ENCODE measurements at regions of chr1 and their contacts with region 1.

Region 1: GRCh38 chr1:41639332-41639936 is 155.0 kb upstream of the EDN2 start:
- DNase-seq: peak; percentile 71
- H3K4me3 Mint-ChIP-seq: no peak overlapping the region
- H3K27ac Mint-ChIP-seq: no peak overlapping the region
- H3K4me1 Mint-ChIP-seq: peaks cover 42% of the 10 kb centered on the region
- H3K27me3 Mint-ChIP-seq: no peaks in the 10 kb centered on the region

Region 2: GRCh38 chr1:41504114-41505035 is 135.1 kb before region 1 on chr1:
- intact Hi-C with region 1: no loop called
- DNase-seq: no peak
- H3K4me3 Mint-ChIP-seq: no peak overlapping the region
- H3K27ac Mint-ChIP-seq: no peak overlapping the region
- H3K4me1 Mint-ChIP-seq: peaks cover 10% of the 10 kb centered on the region
- H3K27me3 Mint-ChIP-seq: no peaks in the 10 kb centered on the region

Region 3: DNA sequence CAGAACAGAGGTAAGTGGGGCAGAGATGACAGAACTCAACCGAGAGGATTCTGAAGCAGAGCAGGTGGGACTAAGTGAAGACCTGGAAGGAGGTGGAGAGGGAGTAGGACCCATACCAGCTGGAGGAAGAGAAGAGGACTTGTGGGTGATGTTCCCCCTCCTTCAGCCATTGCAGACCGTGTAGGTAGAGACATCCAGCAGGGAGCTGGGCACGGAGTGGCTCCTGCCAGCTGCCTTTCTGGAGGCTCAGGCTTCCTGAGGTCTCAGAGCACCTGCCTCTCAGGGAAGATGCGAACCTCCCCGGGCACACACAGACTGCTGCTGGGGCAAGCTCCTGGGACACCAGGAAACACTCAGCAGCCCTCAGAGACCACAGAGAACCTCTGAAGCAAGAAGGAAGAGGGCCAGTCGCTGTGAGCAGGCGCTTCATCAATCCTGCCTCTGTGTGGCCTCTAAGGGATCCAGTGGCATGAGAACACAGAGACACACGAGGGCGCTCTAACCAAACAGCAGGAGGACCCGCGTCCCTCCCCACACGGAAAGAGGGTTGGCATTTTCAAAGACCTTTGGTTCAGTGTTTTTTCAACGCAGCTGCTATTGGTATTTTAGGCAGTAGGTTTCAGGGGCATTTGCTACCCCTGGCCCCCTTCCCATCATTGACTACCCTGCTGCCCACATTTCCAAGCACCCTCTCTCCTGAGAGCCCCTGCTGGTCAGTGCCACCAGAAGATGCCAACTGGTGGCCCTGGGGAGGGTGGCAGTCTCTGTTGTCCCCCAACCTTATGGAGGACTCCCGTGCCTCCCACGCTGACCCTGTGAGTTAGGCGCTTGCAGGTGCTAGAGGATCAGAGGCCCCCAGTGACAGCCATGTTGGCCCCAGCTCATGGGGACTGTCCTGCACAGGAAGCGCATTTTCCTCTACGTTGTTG is 65.4 kb before region 1 on chr1:
- intact Hi-C with region 1: loop called (anchors 10 kb)
- DNase-seq: peak; percentile 95
- H3K4me3 Mint-ChIP-seq: peak overlapping the region; percentile 2
- H3K27ac Mint-ChIP-seq: peak overlapping the region; percentile 58
- H3K4me1 Mint-ChIP-seq: peaks cover 53% of the 10 kb centered on the region
- H3K27me3 Mint-ChIP-seq: no peaks in the 10 kb centered on the region

Region 4: DNA sequence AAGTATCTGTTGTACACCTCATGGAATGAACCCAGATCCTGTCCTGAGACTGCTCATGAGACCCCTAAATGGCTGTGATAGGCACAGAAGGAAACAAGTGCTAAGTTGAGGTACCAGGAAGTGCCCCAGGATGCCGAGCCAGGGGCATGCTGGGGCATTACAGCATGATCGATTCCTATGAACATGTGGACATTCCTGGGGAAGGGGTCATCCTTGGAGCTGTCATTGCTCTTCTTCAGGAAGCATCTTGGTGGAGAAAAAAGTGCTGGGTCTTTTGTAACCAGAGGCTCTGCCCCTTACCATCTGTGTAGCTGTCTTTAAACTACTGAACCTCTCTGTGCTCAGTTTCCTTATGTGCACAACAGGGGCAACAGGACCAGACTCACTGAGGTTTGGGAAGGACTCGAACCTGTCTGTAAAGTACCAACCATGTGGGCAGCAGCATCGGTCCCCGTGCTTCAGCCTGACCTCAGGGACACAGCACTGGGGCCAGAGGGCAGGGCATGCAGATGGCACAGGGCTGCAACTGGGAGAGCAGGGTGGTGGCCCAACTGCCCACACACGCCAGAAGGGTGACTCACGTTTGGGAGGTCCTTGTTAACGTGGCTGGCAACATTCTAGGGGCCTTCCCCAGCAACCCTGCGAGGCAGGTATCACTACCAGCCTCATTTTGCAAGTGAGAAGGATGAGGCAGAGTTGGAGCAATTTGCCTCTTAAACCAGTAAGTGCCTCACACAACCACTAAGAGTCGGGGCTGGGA is 12.6 kb before region 1 on chr1:
- intact Hi-C with region 1: loop called (anchors 2 kb)
- DNase-seq: no peak
- H3K4me3 Mint-ChIP-seq: no peak overlapping the region
- H3K27ac Mint-ChIP-seq: peak overlapping the region; percentile 66
- H3K4me1 Mint-ChIP-seq: peaks cover 59% of the 10 kb centered on the region
- H3K27me3 Mint-ChIP-seq: no peaks in the 10 kb centered on the region

Region 5: DNA sequence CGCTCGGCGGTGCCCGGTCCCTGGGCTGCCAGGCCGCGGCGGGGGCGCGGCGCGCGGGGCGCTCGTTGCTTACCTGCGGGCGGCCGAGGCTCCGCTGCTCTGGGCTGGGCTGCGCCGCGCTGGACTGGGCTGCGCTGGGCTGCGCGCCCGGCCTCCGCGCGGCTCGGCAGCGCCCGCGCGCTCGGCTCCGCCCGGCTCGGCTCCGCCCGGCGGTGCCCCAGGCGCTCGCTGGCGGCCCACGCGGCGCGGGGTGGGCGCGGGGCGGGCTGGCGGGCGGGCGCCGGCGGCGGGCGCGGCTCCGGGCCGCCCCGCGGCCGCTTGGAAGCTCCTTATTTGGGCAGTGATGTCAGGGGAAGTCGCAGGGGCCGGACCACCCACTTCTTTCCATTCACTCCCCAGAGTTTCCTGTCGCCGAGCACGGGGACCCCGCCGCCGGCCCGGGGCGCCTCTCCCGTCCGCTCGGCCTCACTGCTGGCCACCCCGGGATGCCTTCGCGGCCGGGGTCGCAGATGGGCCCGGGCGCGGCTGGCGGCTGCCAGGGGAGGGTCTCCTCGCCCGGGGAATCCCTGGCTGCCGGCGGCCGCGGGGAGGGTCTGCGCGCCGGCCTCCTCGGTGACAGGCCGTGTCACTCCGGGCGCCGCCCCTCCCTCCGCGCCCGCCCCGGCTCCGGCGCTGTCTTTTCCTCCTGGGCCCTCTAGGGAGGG is 22.8 kb after region 1 on chr1:
- intact Hi-C with region 1: loop called (anchors 1 kb)
- DNase-seq: peak; percentile 93
- H3K4me3 Mint-ChIP-seq: peak overlapping the region; percentile 71
- H3K27ac Mint-ChIP-seq: peak overlapping the region; percentile 74
- H3K4me1 Mint-ChIP-seq: peaks cover 66% of the 10 kb centered on the region
- H3K27me3 Mint-ChIP-seq: no peaks in the 10 kb centered on the region

Region 6: DNA sequence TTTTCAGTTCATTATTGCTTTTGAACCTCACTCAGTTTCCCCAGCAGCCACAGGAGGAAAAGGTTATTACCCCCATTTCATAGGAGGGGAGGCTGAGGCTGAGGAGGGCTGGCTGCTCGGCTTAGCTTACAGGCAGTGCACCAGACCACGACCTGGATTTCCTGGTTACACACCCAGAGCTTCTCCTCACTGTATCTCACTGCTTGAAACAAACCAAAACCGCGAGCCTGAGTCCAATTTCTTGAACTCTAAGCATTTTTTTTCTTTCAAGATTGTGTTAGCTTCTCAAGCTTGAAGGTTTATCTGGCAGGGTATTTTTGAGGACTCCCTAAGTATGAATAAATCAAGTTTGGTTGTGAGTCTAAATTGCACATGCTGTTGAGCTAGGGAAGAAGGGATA is 33.9 kb after region 1 on chr1:
- intact Hi-C with region 1: no loop called
- DNase-seq: peak; percentile 90
- H3K4me3 Mint-ChIP-seq: peak overlapping the region; percentile 67
- H3K27ac Mint-ChIP-seq: peak overlapping the region; percentile 80
- H3K4me1 Mint-ChIP-seq: peaks cover 88% of the 10 kb centered on the region
- H3K27me3 Mint-ChIP-seq: no peaks in the 10 kb centered on the region

Region 7: DNA sequence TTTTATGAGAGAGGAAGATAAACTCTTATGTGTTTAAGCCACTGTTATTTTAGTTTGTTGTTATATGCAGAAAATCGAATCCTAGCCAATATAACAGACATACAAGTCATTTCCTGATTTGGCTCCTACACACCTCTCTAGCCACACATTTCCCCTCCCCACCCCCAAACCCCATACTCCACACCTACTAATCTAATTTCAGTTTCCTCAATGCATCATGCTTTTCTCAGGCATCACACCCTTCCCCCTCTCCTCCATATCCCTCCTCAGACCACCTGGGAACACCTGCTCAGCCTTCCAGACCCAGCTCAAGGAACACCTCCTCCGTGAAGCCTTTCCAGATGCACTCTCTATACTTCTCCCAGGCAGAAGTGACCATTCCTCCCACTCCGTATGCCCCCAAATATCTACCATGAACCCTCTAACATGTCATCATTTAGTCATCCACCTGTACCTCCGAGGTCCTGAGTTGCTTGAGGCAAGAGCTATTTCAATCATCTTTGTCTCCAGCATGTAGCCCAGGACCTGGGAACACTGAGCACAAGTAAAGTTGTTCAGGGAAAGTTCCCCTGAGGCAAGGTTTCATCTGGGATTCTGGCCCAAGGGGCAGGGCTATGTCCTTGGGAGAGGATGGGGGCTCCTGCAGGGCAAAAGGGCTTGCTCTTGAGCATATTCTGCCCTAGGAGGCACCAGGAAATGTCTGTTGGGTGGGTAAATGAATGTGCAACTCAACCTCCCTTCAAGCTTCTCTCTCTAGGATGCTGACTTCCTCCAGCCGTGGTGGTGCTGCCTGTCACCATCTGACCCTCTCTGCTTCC is 152.4 kb after region 1 on chr1:
- intact Hi-C with region 1: loop called (anchors 5 kb)
- DNase-seq: peak; percentile 74
- H3K4me3 Mint-ChIP-seq: peak overlapping the region; percentile 64
- H3K27ac Mint-ChIP-seq: peak overlapping the region; percentile 75
- H3K4me1 Mint-ChIP-seq: peaks cover 51% of the 10 kb centered on the region
- H3K27me3 Mint-ChIP-seq: no peaks in the 10 kb centered on the region

Region 8: DNA sequence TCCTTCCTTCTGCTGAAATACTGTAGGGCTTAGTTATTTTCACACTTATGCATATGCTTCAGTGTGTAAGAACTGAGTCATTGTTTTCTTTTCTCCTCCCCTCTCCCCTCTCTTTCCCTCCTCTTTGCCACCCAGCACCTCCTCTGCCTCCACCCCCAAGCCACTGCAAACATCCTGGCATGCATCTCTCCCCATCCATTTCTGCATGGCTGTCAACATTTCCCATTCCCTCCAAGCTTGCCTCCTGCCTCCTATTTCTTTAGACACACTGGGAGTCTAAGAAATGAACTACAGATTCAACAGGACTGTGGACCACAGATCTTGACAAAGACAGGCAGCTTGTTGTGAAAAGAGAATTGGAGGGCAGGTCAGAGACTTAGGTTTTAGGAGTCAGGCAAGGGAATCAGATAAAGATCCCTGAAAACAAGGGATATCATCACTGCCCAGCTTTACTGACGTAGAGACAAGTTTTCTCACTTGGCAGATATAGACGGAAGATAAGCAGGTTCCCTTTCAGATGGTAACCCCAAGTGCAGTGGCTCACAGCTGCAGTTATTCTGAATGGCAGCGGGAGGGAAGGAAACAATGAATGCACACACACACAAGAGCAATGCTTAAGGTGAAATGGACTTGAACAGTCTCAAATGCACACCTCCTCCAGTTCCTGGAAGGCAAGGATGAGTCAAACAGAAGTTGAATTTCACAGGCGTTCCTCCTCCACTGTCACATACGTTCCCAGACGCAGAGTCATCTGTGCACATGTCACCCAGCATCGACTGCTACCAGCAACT is 223.1 kb after region 1 on chr1:
- intact Hi-C with region 1: loop called (anchors 5 kb)
- DNase-seq: peak; percentile 85
- H3K4me3 Mint-ChIP-seq: peak overlapping the region; percentile 53
- H3K27ac Mint-ChIP-seq: peak overlapping the region; percentile 91
- H3K4me1 Mint-ChIP-seq: peaks cover 42% of the 10 kb centered on the region
- H3K27me3 Mint-ChIP-seq: no peaks in the 10 kb centered on the region

Measured in activated CD4-positive, alpha-beta T cell treated with anti-CD3 and anti-CD28 coated beads, Interleukin-2, amount 10 ng/mL, durations not matched to agents 24 days and 14 days (primary cell).